Right cardiac atrium (tissue), 5 donors: ENCODE measurements at regions of chr3 and their contacts with region 1.

Region 1: GRCh38 chr3:158659454-158660237 is 12.8 kb downstream of the LXN start:
- DNase-seq: peak; percentile 27 to 72 (median 58)
- ATAC-seq: peak; percentile 76 to 80
- H3K4me3 ChIP-seq: no peak overlapping the region
- H3K27ac ChIP-seq: no peak overlapping the region
- H3K4me1 ChIP-seq: no peaks in the 10 kb centered on the region
- H3K27me3 ChIP-seq: no peaks in the 10 kb centered on the region

Region 2: DNA sequence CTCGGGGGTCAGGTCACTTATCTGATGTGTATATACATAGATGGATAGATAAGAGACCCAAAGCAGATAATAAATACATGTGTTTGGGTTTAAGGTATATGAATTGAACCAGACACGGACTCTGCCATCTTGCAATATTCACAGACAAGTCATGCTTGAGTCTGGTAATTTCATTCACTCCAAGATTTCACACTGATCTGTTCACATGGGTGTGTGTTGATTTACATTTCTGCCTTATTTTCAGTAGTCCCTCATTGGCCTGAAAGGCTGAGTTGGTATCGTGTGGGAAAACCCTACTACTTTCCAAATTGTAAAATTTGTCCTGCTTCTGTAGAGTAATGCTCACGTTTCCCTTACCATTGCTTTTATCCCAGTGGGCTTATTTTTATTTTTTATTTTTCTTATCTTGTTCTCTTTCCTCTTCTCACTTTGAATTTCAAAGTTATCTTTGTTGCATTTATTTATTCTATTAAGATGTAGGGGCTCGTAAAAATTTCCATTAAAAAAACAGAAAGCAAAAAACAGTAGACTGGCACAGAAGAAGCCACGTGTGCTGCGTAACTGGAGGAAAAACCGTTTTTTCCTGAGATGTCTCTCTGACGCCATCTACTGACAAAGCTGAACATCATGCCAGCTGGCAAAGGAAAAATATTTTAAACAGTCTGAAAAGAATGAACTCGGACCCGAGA is 131.4 kb after region 1 on chr3:
- intact Hi-C with region 1: loop called (anchors 5 to 10 kb)
- DNase-seq: peak in 1 of 3 donors; percentile 33
- ATAC-seq: peak; percentile 70 to 74
- H3K4me3 ChIP-seq: no peak overlapping the region
- H3K27ac ChIP-seq: no peak overlapping the region
- H3K4me1 ChIP-seq: no peaks in the 10 kb centered on the region
- H3K27me3 ChIP-seq: no peaks in the 10 kb centered on the region

Region 3: GRCh38 chr3:158830391-158830790 is 170.7 kb after region 1 on chr3:
- intact Hi-C with region 1: no loop called
- DNase-seq: no peak
- ATAC-seq: no peak
- H3K4me3 ChIP-seq: no peak overlapping the region
- H3K27ac ChIP-seq: no peak overlapping the region
- H3K4me1 ChIP-seq: no peaks in the 10 kb centered on the region
- H3K27me3 ChIP-seq: no peaks in the 10 kb centered on the region